ENCODE measurements at regions of chr2 and their contacts with region 1.

Region 1: GRCh38 chr2:160109936-160110673 is 47.7 kb upstream of the PLA2R1 start:
- H3K4me3 Mint-ChIP-seq: no peak overlapping the region
- H3K27ac Mint-ChIP-seq: no peak overlapping the region
- H3K4me1 Mint-ChIP-seq: peaks cover 11% of the 10 kb centered on the region
- H3K27me3 Mint-ChIP-seq: no peaks in the 10 kb centered on the region

Region 2: GRCh38 chr2:160207804-160208661 is 97.9 kb after region 1 on chr2:
- intact Hi-C with region 1: loop called (anchors 2 kb)
- H3K4me3 Mint-ChIP-seq: peak overlapping the region; percentile 51
- H3K27ac Mint-ChIP-seq: peak overlapping the region; percentile 86
- H3K4me1 Mint-ChIP-seq: peaks cover 43% of the 10 kb centered on the region
- H3K27me3 Mint-ChIP-seq: peaks cover 3% of the 10 kb centered on the region

Region 3: GRCh38 chr2:160269803-160270570 is 159.9 kb after region 1 on chr2:
- intact Hi-C with region 1: loop called (anchors 5 kb)
- H3K4me3 Mint-ChIP-seq: peak overlapping the region; percentile 70
- H3K27ac Mint-ChIP-seq: peak overlapping the region; percentile 90
- H3K4me1 Mint-ChIP-seq: peaks cover 51% of the 10 kb centered on the region
- H3K27me3 Mint-ChIP-seq: peaks cover 3% of the 10 kb centered on the region